ENCODE measurements at regions of chr19 and their contacts with region 1.

Region 1: GRCh38 chr19:49200238-49200862 is 42.8 kb downstream of the TRPM4 start:
- DNase-seq: peak in 1 of 3 donors; percentile 31
- ATAC-seq: peak; percentile 13 to 49
- H3K4me3 ChIP-seq: no peak overlapping the region
- H3K27ac ChIP-seq: no peak overlapping the region
- H3K4me1 ChIP-seq: no peaks in the 10 kb centered on the region
- H3K27me3 ChIP-seq: no peaks in the 10 kb centered on the region

Region 2: DNA sequence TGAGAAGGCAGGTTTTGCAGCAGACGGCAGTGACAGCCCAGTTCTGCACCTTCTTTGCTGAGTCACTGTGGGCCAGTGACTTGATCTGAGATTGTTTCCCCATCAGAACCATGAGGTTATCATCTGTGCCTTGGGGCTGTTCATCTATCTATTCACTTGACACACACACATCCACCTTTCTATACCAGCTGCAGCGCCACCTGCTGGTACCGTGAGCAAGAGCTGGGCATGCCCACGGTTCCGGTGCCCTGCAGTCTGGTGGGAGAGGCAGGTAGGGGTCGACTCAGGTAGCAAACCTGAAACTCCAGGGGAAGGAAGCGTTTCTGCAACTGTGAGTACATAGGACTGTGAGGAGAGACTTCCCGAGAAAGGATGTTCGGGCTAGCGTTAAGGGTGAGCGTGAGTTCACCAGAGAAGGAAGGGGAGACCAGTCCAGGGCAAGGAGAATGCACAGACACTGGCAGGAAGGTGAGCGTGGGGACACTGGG is 93.7 kb before region 1 on chr19:
- intact Hi-C with region 1: loop called in 1 of 4 experiments (anchors 10 kb)
- DNase-seq: peak in 2 of 3 donors; percentile 76 to 83
- ATAC-seq: peak; percentile 25 to 31
- H3K4me3 ChIP-seq: no peak overlapping the region
- H3K27ac ChIP-seq: no peak overlapping the region
- H3K4me1 ChIP-seq: no peaks in the 10 kb centered on the region
- H3K27me3 ChIP-seq: no peaks in the 10 kb centered on the region

Region 3: DNA sequence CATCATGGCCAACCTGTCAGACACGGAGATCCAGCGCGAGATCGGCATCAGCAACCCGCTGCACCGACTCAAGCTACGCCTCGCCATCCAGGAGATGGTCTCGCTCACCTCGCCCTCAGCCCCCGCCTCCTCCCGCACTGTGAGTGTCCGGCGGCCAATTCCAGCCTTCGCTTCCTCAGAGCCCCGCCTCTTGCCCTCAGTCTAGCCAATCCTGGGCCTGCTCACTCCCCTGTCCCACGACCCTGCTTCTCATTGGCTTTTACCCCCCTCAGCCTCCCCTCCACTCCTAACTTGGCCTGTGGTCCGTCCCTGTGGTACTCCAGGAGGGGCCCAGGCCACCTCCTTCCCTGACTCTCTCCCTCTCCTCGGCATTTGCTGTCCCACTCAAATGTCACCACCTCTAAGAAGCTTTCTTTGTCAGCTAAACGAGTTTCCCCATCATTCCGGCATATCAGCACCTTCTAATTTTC is 57.4 kb before region 1 on chr19:
- intact Hi-C with region 1: no loop called
- DNase-seq: peak; percentile 92 to 97 (median 96)
- ATAC-seq: peak; percentile 95 to 97
- H3K4me3 ChIP-seq: peak overlapping the region; percentile 40
- H3K27ac ChIP-seq: no peak overlapping the region
- H3K4me1 ChIP-seq: no peaks in the 10 kb centered on the region
- H3K27me3 ChIP-seq: no peaks in the 10 kb centered on the region

Measured in right cardiac atrium (tissue), 5 donors.